ENCODE measurements at regions of chr4 and their contacts with region 1.

Region 1: GRCh38 chr4:94621491-94622080 is 136.2 kb upstream of the BMPR1B start:
- DNase-seq: no peak
- H3K4me3 Mint-ChIP-seq: no peak overlapping the region
- H3K27ac Mint-ChIP-seq: no peak overlapping the region
- H3K4me1 Mint-ChIP-seq: no peaks in the 10 kb centered on the region
- H3K27me3 Mint-ChIP-seq: no peaks in the 10 kb centered on the region

Region 2: DNA sequence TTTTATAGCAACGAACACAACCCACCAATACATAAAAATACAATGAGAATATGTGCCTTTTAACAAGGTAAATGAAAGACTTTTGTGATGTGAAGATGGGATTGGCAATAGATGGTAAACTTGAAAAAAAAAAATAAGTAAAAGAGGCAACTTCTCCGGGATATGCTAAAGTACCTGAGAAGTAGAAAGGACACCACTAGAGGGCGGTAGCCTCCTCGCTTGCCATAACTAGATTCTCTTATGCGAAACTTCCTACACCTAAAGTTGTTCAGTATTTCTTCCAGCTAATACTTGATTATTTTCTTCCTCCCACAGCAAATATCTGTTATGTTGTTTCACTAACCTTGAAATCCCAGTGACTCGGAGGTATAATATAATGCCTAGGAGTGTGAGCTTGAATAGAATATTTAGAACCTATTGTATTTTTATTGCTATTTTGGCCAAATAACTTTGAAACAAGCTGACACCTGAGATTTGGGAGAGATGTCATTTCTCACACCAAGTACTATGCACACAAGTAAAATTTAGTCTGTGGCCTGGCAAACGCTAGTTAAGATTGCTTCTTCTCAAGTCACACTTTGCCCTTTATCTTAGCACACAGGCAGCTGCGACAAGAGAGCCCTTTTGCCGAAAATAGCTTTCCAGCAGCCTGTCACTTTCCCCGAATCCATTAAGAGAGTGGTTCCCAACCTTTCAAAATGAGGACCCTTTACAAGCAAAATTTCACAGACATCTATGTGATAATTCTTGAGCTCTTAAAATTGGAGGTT is 214.7 kb before region 1 on chr4:
- CTCF ChIA-PET with region 1: interaction called, 11 read pairs
- POLR2A ChIA-PET with region 1: no interaction called
- DNase-seq: peak; percentile 57
- H3K4me3 Mint-ChIP-seq: no peak overlapping the region
- H3K27ac Mint-ChIP-seq: no peak overlapping the region
- H3K4me1 Mint-ChIP-seq: no peaks in the 10 kb centered on the region
- H3K27me3 Mint-ChIP-seq: peaks cover 2% of the 10 kb centered on the region

Region 3: GRCh38 chr4:94610145-94610544 is 11.4 kb before region 1 on chr4:
- CTCF ChIA-PET with region 1: interaction called, 12 read pairs
- POLR2A ChIA-PET with region 1: no interaction called
- DNase-seq: no peak
- H3K4me3 Mint-ChIP-seq: no peak overlapping the region
- H3K27ac Mint-ChIP-seq: no peak overlapping the region
- H3K4me1 Mint-ChIP-seq: peaks cover 4% of the 10 kb centered on the region
- H3K27me3 Mint-ChIP-seq: no peaks in the 10 kb centered on the region

Region 4: GRCh38 chr4:94636004-94636403 is 14.4 kb after region 1 on chr4:
- CTCF ChIA-PET with region 1: no interaction called
- POLR2A ChIA-PET with region 1: no interaction called
- DNase-seq: no peak
- H3K4me3 Mint-ChIP-seq: no peak overlapping the region
- H3K27ac Mint-ChIP-seq: no peak overlapping the region
- H3K4me1 Mint-ChIP-seq: no peaks in the 10 kb centered on the region
- H3K27me3 Mint-ChIP-seq: no peaks in the 10 kb centered on the region

Measured in activated CD4-positive, alpha-beta memory T cell treated with anti-CD3 and anti-CD28 coated beads, Interleukin-2, amount 10 ng/mL, durations not matched to agents 7 days and 5 days (primary cell).